ENCODE measurements at regions of chr6 and their contacts with region 1.

Region 1: DNA sequence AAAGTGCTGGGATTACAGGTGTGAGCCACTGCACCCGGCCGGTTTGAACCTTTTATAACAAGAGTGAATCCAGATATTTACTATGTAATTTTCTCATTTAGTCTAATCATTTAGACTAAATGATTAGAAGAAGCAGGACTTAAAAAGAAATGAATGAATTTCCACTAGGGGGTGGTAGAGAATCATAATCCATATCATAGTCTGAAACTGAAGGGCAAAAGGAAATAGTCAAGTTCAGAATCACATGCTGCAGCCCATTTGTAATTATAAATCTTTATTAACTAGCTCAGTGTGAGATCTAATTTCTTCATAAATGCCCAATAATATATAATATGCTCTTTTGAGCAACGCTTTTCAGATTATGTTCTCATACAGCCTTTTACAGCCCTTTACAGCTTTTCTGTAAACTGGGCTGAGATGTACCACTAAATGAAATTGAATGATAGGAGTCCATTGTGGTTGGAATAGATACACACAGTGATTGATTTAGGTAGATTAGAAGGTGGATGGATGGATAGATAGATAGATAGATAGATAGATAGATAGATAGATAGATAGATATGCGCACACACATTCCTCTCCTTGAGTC is 31.8 kb downstream of the PSMB9 start:
- DNase-seq: no peak
- ATAC-seq: peak; percentile 61
- H3K4me3 Mint-ChIP-seq: no peak overlapping the region
- H3K27ac Mint-ChIP-seq: no peak overlapping the region
- H3K4me1 Mint-ChIP-seq: peaks cover 2% of the 10 kb centered on the region
- H3K27me3 Mint-ChIP-seq: peaks cover 16% of the 10 kb centered on the region

Region 2: DNA sequence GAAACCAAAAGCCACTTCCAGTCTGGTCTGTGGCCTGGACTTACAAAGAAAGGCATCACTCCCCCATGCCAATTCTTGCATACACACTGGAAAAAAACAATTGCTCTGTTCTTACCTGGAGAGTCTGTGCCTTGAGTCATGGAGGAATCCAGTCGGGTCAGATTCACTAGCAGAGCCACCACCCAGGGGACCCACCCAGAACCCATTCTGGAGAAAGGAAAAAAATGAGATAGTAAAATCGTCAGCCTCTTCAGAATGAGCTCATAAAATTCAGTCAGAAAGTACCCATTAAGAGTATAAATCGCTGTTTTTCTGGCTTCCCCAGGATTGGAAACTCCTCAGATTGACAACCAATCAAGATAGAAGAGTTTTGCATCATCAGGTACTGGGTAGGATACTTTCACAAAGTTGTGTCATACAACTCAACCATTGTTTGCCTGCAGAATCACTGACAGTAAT is 69.0 kb before region 1 on chr6 and contains the start of gene HLA-DOB:
- CTCF ChIA-PET with region 1: no interaction called
- POLR2A ChIA-PET with region 1: no interaction called
- DNase-seq: no peak
- ATAC-seq: no peak
- H3K4me3 Mint-ChIP-seq: no peak within 1 kb of the TSS
- H3K27ac Mint-ChIP-seq: no peak within 1 kb of the TSS
- H3K4me1 Mint-ChIP-seq: peaks cover 16% of the 10 kb centered on the region
- H3K27me3 Mint-ChIP-seq: no peaks in the 10 kb centered on the region
- total RNA-seq, gene HLA-DOB: 15.6 to 17.0 TPM

Region 3: DNA sequence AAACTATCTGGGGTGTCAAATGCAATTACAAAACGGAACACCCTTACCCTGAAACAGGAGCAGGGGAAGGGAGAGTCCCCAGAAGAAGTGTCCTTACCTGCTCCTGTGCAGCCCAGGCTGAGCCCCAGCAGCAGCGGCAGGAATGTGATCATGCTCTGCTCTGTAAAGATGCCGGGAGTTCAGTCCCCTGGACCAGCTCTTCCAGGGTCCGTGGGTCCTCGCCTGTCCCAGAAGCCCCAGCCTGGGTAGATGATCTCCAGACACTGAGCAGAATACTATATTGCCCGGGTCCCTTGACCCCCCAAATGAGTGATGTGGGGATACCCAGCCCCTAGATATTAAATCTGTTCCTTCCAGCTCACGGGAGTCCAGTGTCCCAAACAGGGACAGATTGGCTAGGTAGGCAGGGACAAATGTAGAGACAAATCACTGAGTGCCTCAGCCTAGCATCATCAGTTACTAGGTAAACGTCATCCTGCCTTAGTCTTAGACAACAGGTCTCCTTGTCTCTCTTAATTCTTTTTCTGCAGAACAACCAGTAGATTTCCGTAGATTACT is 54.9 kb after region 1 on chr6 and contains the start of gene HLA-DMB:
- CTCF ChIA-PET with region 1: interaction called, 10 read pairs
- POLR2A ChIA-PET with region 1: interaction called, 3 read pairs
- DNase-seq: peak; percentile 73
- ATAC-seq: peak; percentile 90
- H3K4me3 Mint-ChIP-seq: peak within 1 kb of the TSS; percentile 86
- H3K27ac Mint-ChIP-seq: peak within 1 kb of the TSS; percentile 97
- H3K4me1 Mint-ChIP-seq: peaks cover 69% of the 10 kb centered on the region
- H3K27me3 Mint-ChIP-seq: no peaks in the 10 kb centered on the region
- total RNA-seq, gene HLA-DMB: 14.4 to 14.7 TPM

Region 4: DNA sequence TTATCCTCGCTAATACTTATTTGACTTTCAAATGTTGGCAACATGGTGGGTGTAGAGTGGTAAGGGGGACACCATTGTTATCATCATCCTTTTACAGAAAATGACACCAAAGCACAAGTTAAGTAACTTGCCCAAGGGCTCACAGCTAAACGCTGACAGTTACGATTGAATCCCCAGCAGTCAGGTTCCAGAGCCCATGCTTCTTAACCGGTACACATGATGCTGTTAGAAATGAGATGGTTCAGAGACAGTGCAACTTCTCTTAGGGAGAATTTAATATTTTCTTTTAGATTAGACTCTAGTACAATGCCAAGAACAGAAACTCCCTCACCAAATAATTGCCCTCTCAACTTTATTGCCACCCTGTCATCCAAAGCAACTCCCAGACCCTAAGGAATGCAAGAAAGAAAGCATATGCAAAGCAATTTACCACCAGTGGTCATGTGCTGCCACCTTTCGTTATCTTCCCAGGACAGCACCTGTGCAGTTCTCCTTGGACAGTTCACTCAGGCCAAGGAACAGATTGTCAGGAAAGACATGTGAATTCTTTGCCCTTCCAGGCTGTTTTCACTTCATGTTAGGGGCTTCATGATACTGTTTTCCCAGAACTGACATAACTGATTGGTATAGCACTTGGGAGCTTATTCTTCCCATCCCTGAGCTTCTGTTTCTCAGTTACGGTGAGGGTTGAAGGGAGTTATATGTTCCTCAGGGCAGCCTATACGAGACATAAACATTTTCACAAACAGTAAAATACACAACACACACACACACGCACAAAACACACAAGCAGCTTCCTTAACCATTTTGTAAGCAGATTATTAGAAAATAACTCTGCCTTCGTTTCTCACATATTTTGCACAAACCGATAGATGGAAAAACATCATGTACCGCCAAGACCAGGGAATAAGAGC is 62.0 kb after region 1 on chr6:
- CTCF ChIA-PET with region 1: interaction called, 57 read pairs
- POLR2A ChIA-PET with region 1: interaction called, 3 read pairs
- DNase-seq: peak; percentile 67
- ATAC-seq: no peak
- H3K4me3 Mint-ChIP-seq: no peak overlapping the region
- H3K27ac Mint-ChIP-seq: no peak overlapping the region
- H3K4me1 Mint-ChIP-seq: peaks cover 78% of the 10 kb centered on the region
- H3K27me3 Mint-ChIP-seq: no peaks in the 10 kb centered on the region